Breast epithelium (tissue), 4 donors: ENCODE measurements at regions of chr15 and their contacts with region 1.

Region 1: DNA sequence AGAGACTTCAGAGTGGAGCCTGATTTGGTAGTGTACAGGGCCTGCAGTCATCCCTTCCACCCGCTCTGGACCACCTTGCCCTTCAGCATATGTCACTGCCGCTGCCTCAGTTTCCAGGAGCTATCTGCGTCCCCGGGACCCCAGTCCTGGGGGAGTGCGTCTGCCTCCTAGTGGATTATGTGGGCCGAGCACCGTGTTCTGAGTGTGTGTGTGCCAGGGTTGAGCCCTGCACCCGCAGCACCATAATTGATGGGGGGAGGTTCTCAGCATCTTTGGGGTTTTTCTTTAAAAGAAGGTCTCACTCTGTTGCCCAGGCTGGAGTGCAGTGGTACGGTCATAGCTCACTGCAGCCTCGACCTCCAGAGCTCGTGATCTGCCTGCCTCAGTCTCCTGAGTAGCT is 33.6 kb downstream of the CD276 start:
- DNase-seq: no peak
- H3K4me3 ChIP-seq: no peak overlapping the region
- H3K27ac ChIP-seq: no peak overlapping the region
- H3K4me1 ChIP-seq: no peaks in the 10 kb centered on the region
- H3K27me3 ChIP-seq: no peaks in the 10 kb centered on the region
- CTCF ChIP-seq: no peak
- POLR2A ChIP-seq: no peak

Region 2: DNA sequence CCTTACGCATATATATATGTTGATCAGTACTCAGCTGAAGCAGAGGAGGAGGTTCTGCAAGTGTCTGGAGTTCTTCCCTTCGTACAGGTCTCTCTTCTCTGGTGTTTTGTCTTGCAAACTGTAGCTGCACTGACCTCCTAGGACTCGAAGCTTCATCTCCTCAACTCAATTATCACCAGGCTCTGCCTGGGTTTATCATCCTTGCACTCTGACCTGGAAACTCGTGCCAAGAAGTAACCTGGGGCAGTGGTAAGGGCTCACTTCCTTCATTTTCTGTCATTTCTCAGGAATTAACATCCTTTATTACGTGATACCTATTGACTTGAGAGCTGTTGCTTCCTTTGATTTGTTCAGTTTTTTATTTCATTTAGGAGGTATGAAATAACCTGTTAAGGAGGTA is 260.5 kb before region 1 on chr15:
- intact Hi-C with region 1: loop called (anchors 5 kb)
- DNase-seq: no peak
- H3K4me3 ChIP-seq: no peak overlapping the region
- H3K27ac ChIP-seq: no peak overlapping the region
- H3K4me1 ChIP-seq: no peaks in the 10 kb centered on the region
- H3K27me3 ChIP-seq: no peaks in the 10 kb centered on the region
- CTCF ChIP-seq: no peak
- POLR2A ChIP-seq: no peak